ENCODE measurements at regions of chr1 and their contacts with region 1.

Region 1: GRCh38 chr1:27010989-27011764 is 1.5 kb downstream of the TENT5B start:
- DNase-seq: peak; percentile 54 to 89
- H3K4me3 ChIP-seq: peak overlapping the region; percentile 72 to 76
- H3K27ac ChIP-seq: peak overlapping the region; percentile 83 to 94
- H3K4me1 ChIP-seq: peaks cover 16 to 24% of the 10 kb centered on the region in 2 donors
- H3K27me3 ChIP-seq: no peaks in the 10 kb centered on the region
- CTCF ChIP-seq: no peak

Region 2: GRCh38 chr1:27031235-27032118 is 20.3 kb after region 1 on chr1:
- intact Hi-C with region 1: loop called (anchors 1 kb)
- DNase-seq: peak; percentile 52 to 92
- H3K4me3 ChIP-seq: peak overlapping the region; percentile 48 to 66
- H3K27ac ChIP-seq: peak overlapping the region; percentile 80 to 93
- H3K4me1 ChIP-seq: peaks cover 11 to 25% of the 10 kb centered on the region in 2 donors
- H3K27me3 ChIP-seq: no peaks in the 10 kb centered on the region
- CTCF ChIP-seq: peak in 1 of 3 experiments; percentile 0

Region 3: GRCh38 chr1:27136998-27137542 is 125.9 kb after region 1 on chr1:
- intact Hi-C with region 1: no loop called
- DNase-seq: peak; percentile 52 to 77
- H3K4me3 ChIP-seq: no peak overlapping the region
- H3K27ac ChIP-seq: peak overlapping the region; percentile 31 to 58
- H3K4me1 ChIP-seq: peaks cover 2 to 24% of the 10 kb centered on the region in 2 donors
- H3K27me3 ChIP-seq: no peaks in the 10 kb centered on the region
- CTCF ChIP-seq: no peak

Region 4: GRCh38 chr1:27430903-27431600 is 419.9 kb after region 1 on chr1:
- intact Hi-C with region 1: no loop called
- DNase-seq: peak in 1 of 2 donors; percentile 67
- H3K4me3 ChIP-seq: peak overlapping the region in 1 of 2 donors; percentile 11
- H3K27ac ChIP-seq: peak overlapping the region; percentile 74 to 78
- H3K4me1 ChIP-seq: peaks cover 38 to 87% of the 10 kb centered on the region in 2 donors
- H3K27me3 ChIP-seq: no peaks in the 10 kb centered on the region
- CTCF ChIP-seq: peak in 1 of 3 experiments; percentile 23

Measured in ascending aorta (tissue), 2 donors.